Posterior cingulate gyrus (tissue), 11 donors: ENCODE measurements at regions of chr18 and their contacts with region 1.

Region 1: DNA sequence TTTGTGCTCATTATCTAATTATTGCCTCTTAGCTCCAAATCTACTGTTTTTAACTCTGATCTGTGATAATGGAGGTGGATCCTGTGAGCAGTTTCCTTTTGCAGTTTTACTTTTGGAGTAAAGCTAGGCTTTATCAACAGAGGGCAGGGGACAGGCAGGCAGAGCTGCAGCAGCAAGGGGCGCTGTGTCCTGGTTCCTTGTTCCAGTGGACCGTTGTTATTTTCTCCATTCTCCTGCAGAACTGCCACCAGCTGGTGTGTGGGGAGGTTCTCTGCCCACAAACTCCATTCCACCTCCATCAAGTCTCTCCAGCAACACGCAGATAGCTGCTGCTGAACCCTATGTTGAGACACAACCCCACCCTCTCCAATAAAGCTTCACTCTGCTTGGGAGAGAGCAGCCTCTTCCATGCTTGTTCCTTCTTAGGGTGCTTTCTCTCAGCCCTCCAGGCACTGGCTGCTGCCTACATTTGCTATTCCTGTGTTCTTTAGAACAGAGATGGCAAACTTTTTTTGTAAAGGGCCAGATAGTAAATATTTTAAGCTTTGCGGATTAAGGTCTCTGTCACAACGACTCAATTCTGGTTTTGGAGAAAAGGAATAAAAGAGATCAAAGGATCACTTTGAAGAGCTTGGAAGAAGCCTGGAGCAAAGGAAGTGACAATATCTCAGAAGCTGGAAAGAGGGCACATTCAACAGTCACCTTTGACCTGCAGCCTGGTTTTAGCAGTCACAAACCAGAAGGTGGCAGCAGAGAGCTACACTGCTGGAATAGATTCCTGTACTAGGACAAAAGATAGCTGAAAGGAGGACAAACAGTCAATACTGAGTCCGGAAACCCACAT is 208.8 kb downstream of the CCDC178 start:
- DNase-seq: peak; percentile 29 to 90 (median 76)

Region 2: DNA sequence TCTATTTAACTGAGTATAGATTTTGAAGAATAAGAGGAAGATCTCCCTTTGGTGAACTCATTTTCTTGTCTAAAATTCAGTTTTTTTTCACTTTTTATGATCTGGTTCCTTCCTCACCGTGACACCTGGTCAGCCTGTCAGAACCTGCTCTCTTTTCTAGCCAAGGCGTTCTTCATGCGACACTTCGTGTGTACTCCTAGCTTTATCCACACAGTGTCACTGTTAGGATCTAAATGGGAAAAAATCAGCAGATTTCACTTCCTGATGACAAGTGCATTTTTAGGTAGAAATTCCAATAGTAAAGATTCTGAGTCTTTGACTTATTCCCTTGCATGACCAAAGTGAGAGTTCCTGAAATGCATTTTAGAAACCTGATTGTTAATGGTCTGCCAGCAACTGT is 548.7 kb before region 1 on chr18:
- intact Hi-C with region 1: no loop called
- DNase-seq: no peak

Region 3: DNA sequence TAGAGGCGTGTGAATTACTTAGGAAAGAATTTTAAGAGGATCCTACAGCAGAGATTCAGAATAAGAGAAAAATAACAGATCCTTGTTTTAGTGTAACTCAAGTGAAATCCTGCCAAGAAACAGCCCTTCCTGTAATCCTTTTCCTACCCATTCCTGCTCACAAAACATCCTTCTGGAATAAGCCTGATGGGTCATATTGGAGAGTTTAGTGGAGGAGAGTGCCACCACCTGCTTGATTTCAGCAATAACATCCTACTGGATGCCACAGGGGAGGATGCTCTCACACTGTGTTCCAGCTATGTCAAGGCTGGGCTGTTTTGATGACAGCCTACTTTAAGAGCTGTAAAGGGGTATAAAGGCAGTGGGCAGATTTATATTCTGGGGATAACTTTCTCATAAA is 263.6 kb after region 1 on chr18:
- intact Hi-C with region 1: loop called (anchors 2 kb)
- DNase-seq: peak in 4 of 10 donors; percentile 16 to 25 (median 23)

Region 4: GRCh38 chr18:33761363-33761762 is 529.7 kb after region 1 on chr18:
- intact Hi-C with region 1: loop called (anchors 1 kb)
- DNase-seq: peak in 5 of 10 donors; percentile 8 to 65 (median 46)